CD8-positive, alpha-beta T cell (primary cell): ENCODE measurements at regions of chr17 and their contacts with region 1.

Region 1: DNA sequence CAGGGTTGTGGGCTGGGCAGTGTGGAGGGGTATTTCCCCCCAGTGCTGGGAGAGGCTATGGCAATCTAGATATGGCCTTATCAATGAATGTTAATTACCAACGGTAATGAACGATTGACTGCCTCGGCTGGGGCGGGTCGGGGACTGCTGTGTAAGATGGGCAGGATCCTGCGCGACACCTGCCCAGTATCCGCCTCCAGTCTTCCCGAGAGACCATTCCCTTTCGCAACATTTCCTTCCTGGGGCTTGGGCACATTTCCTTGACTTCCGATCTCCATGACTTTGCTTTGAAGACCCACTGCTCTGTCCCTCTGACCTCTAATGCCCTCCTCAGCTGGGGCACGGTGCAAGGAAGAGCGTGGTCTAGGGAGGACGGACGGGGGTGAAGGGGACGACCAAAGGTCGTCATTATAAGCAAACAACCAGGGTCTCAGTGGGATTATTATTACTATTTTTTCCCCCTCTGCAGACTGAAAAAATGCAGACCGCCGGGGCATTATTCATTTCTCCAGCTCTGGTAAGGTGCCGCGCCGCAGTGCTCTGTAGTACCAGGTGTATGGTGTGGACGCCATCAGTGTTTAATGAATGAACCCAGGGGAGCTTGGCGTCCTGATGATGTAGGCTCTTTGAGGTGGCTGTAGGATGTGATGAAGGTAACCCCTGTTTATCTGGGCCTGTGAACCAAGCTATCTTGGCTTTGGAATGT is 506 bp downstream of the ATP5MC1 start:
- DNase-seq: peak in 3 of 9 experiments; percentile 33 to 50 (median 38)
- ATAC-seq: no peak
- H3K4me3 ChIP-seq: peak overlapping the region; percentile 52 to 63
- H3K4me3 Mint-ChIP-seq: peak overlapping the region; percentile 93
- H3K27ac ChIP-seq: peak overlapping the region; percentile 55 to 91
- H3K27ac Mint-ChIP-seq: peak overlapping the region; percentile 99
- H3K4me1 ChIP-seq: peaks cover 15% of the 10 kb centered on the region
- H3K4me1 Mint-ChIP-seq: peaks cover 23% of the 10 kb centered on the region
- H3K27me3 ChIP-seq: no peaks in the 10 kb centered on the region
- H3K27me3 Mint-ChIP-seq: no peaks in the 10 kb centered on the region
- CTCF ChIP-seq: no peak

Region 2: DNA sequence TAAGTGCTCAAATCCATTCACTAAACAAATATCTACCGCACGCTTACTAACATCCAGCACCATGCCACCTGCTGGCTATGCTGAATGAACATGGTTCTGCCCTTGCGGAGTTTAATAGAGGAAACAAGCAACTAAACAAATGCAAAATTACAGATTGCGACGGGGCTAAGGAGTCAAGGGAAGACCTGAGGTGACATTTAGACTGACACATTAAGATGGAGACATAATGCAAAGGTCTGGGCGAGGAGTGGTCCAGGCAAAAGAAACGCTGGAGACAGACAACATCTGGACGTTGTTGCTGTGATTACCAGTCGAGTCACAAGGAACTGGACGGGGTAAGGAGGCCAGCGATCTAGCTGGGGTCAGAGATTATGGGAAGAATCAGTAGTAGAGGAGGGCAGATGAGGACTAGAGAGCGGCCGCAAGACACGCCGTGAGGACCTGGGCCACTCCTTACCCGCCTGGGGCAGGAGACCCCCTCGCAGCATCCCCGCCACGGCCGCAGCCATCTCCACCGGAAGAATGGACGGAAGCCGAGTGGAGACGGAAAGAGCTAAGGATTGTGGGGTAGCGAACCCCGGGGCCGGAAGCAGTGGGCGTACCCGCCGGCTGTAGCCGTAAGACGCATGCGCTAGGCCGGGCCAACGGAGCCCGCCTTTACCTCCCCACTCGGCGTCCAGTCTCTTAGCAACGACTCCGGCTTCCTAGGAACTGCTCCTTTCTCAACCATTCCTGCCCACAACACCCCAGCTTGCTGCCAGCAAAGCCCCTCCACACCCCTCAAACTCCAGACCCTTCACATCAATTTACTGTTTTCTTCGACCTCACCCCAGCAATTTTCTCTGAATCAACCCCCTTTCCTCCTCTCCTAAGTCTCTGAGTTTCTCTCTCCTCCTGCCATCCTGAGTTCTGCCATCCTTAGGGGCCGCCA is 1061.8 kb before region 1 on chr17 and contains the starts of genes LRRC46 and MRPL10:
- CTCF ChIA-PET with region 1: no interaction called
- POLR2A ChIA-PET with region 1: no interaction called
- intact Hi-C with region 1: loop called in 1 of 2 experiments (anchors 5 kb)
- DNase-seq: peak; percentile 80 to 96 (median 91)
- ATAC-seq: peak; percentile 71
- H3K4me3 ChIP-seq: peak within 1 kb of the TSS; percentile 87 to 95
- H3K4me3 Mint-ChIP-seq: peak within 1 kb of the TSS; percentile 91
- H3K27ac ChIP-seq: peak within 1 kb of the TSS; percentile 84 to 96
- H3K27ac Mint-ChIP-seq: peak within 1 kb of the TSS; percentile 98
- H3K4me1 ChIP-seq: peaks cover 30% of the 10 kb centered on the region
- H3K4me1 Mint-ChIP-seq: peaks cover 51% of the 10 kb centered on the region
- H3K27me3 ChIP-seq: no peaks in the 10 kb centered on the region
- H3K27me3 Mint-ChIP-seq: no peaks in the 10 kb centered on the region
- CTCF ChIP-seq: peak; percentile 36
- total RNA-seq, gene LRRC46: 0.43 to 1.5 TPM
- total RNA-seq, gene MRPL10: 67.5 to 69.7 TPM

Region 3: GRCh38 chr17:48830840-48831548 is 62.1 kb before region 1 on chr17 and contains the start of gene CALCOCO2:
- CTCF ChIA-PET with region 1: no interaction called
- POLR2A ChIA-PET with region 1: interaction called, 3 read pairs
- intact Hi-C with region 1: loop called (anchors 1 to 2 kb)
- DNase-seq: peak; percentile 69 to 95 (median 88)
- ATAC-seq: peak; percentile 83
- H3K4me3 ChIP-seq: peak within 1 kb of the TSS; percentile 89 to 100
- H3K4me3 Mint-ChIP-seq: peak within 1 kb of the TSS; percentile 97
- H3K27ac ChIP-seq: peak within 1 kb of the TSS; percentile 92 to 93
- H3K27ac Mint-ChIP-seq: peak within 1 kb of the TSS; percentile 95
- H3K4me1 ChIP-seq: peaks cover 28% of the 10 kb centered on the region
- H3K4me1 Mint-ChIP-seq: peaks cover 50% of the 10 kb centered on the region
- H3K27me3 ChIP-seq: no peaks in the 10 kb centered on the region
- H3K27me3 Mint-ChIP-seq: peaks cover 2% of the 10 kb centered on the region
- CTCF ChIP-seq: no peak
- total RNA-seq, gene CALCOCO2: 112 to 121 TPM

Region 4: DNA sequence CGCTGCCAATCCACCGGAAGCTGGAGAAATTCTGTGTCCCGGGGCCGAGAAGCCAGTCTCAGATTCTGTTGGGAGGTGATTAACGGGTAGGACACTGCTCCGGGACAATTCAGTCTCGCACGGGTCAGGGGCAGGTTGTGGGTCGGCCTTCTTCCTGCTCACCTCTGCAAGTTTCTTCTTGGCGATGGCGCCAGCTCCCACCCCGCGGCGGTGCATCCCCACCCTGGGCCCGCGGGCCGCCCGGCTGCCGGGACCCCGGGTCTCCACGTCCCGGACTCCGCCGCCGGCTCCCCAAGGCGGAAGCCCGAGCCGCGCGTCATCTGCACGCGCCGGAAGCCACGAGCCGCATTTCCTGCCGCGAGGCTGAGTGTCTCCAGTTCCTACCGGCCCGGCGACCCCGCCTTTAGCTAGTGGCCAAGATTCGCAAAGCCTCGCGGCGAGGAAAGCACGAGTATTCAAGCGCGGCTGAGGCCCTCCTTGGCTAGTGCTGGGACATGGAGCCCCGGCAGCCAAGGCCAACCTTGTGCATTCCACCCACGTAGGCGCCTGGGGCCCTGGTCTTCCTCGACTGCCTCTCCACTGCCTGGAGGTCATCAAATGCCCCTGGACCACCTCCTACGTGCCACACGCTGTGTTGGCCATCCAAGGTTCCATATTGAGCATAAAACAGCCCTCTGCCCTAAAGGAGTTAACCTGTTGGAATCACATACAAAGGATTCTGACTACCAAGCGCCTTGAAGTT is 51.6 kb after region 1 on chr17 and contains the start of gene SNF8:
- CTCF ChIA-PET with region 1: no interaction called
- POLR2A ChIA-PET with region 1: interaction called, 13 read pairs
- intact Hi-C with region 1: loop called (anchors 1 kb)
- DNase-seq: peak; percentile 83 to 96 (median 92)
- ATAC-seq: peak; percentile 93
- H3K4me3 ChIP-seq: peak within 1 kb of the TSS; percentile 94 to 98
- H3K4me3 Mint-ChIP-seq: peak within 1 kb of the TSS; percentile 97
- H3K27ac ChIP-seq: peak within 1 kb of the TSS; percentile 90 to 93
- H3K27ac Mint-ChIP-seq: peak within 1 kb of the TSS; percentile 97
- H3K4me1 ChIP-seq: peaks cover 25% of the 10 kb centered on the region
- H3K4me1 Mint-ChIP-seq: peaks cover 19% of the 10 kb centered on the region
- H3K27me3 ChIP-seq: no peaks in the 10 kb centered on the region
- H3K27me3 Mint-ChIP-seq: no peaks in the 10 kb centered on the region
- CTCF ChIP-seq: no peak
- total RNA-seq, gene SNF8: 61.7 to 64.3 TPM

Region 5: GRCh38 chr17:49210158-49211029 is 317.3 kb after region 1 on chr17 and contains the starts of genes ABI3 and GNGT2:
- CTCF ChIA-PET with region 1: no interaction called
- POLR2A ChIA-PET with region 1: no interaction called
- intact Hi-C with region 1: loop called in 1 of 2 experiments (anchors 10 kb)
- DNase-seq: peak in 7 of 9 experiments; percentile 43 to 86 (median 69)
- ATAC-seq: peak; percentile 80
- H3K4me3 ChIP-seq: peak within 1 kb of the TSS; percentile 86 to 87
- H3K4me3 Mint-ChIP-seq: peak within 1 kb of the TSS; percentile 95
- H3K27ac ChIP-seq: peak within 1 kb of the TSS; percentile 61 to 63
- H3K27ac Mint-ChIP-seq: peak within 1 kb of the TSS; percentile 91
- H3K4me1 ChIP-seq: peaks cover 78% of the 10 kb centered on the region
- H3K4me1 Mint-ChIP-seq: peaks cover 71% of the 10 kb centered on the region
- H3K27me3 ChIP-seq: no peaks in the 10 kb centered on the region
- H3K27me3 Mint-ChIP-seq: no peaks in the 10 kb centered on the region
- CTCF ChIP-seq: no peak
- total RNA-seq, gene ABI3: 12.8 to 13.6 TPM
- total RNA-seq, gene GNGT2: 3.7 to 4.1 TPM